Activated B cell treated with CpG ODN at 0.5 μM for 24 hours (primary cell): ENCODE measurements at regions of chr9 and their contacts with region 1.

Region 1: GRCh38 chr9:21812946-21813568 is 10.6 kb downstream of the MTAP start:
- DNase-seq: peak; percentile 64
- ATAC-seq: peak; percentile 83
- H3K4me3 Mint-ChIP-seq: no peak overlapping the region
- H3K27ac Mint-ChIP-seq: no peak overlapping the region
- H3K4me1 Mint-ChIP-seq: peaks cover 27% of the 10 kb centered on the region
- H3K27me3 Mint-ChIP-seq: no peaks in the 10 kb centered on the region
- CTCF ChIP-seq: peak; percentile 85

Region 2: DNA sequence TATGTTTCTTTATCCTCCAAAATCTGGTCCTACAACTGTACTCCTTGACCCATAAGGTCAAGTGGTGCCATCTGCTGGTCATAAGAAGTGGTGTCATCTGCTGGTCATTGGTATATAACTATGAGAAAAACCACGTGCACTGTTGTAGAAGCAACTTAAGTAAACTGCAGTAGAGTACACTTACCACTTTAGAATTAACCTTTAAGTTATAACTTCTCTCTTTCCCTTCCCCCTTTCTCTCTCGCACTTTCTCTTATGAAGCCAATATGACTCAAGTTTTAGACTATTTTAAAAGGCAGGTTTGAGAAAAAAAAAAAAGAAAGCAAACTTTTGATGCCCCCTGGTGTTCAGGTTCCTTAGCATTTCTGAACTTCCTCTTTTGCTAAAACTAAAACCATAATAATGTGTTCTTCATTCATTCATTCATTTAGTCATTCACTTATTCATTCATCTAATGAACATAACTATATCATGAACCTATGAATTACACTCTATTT is 23.5 kb before region 1 on chr9:
- CTCF ChIA-PET with region 1: no interaction called
- POLR2A ChIA-PET with region 1: no interaction called
- intact Hi-C with region 1: no loop called
- DNase-seq: no peak
- ATAC-seq: peak; percentile 98
- H3K4me3 Mint-ChIP-seq: peak overlapping the region; percentile 80
- H3K27ac Mint-ChIP-seq: peak overlapping the region; percentile 76
- H3K4me1 Mint-ChIP-seq: peaks cover 7% of the 10 kb centered on the region
- H3K27me3 Mint-ChIP-seq: peaks cover 17% of the 10 kb centered on the region
- CTCF ChIP-seq: peak; percentile 85

Region 3: GRCh38 chr9:21802195-21803000 is 10.7 kb before region 1 on chr9 and contains the start of gene MTAP:
- CTCF ChIA-PET with region 1: interaction called, 10 read pairs
- POLR2A ChIA-PET with region 1: interaction called, 5 read pairs
- intact Hi-C with region 1: loop called (anchors 1 kb)
- DNase-seq: peak; percentile 68
- ATAC-seq: peak; percentile 88
- H3K4me3 Mint-ChIP-seq: peak within 1 kb of the TSS; percentile 99
- H3K27ac Mint-ChIP-seq: peak within 1 kb of the TSS; percentile 91
- H3K4me1 Mint-ChIP-seq: peaks cover 53% of the 10 kb centered on the region
- H3K27me3 Mint-ChIP-seq: peaks cover 15% of the 10 kb centered on the region
- CTCF ChIP-seq: no peak
- total RNA-seq, gene MTAP: 30.4 and 43.2 TPM in 2 replicates

Region 4: DNA sequence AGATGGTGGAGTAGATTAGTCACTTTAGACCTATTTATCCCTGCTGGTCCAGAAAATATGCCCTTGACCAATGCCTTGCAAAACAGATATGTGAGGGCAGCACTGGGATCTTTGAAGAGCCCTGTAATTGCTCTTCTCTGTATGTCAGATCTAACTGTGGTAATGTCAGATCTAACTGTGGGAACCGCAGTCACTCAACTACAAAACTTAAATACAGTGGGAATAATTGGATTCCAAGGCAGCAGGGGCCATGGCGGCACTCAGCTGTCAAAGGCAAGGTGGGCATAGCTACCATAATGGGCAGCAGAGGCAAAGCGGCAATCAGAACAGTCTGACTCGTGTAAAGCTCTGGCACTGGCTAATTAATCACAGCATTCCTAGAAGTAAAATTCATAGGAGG is 35.6 kb after region 1 on chr9:
- CTCF ChIA-PET with region 1: no interaction called
- POLR2A ChIA-PET with region 1: no interaction called
- intact Hi-C with region 1: no loop called
- DNase-seq: no peak
- ATAC-seq: no peak
- H3K4me3 Mint-ChIP-seq: no peak overlapping the region
- H3K27ac Mint-ChIP-seq: no peak overlapping the region
- H3K4me1 Mint-ChIP-seq: peaks cover 14% of the 10 kb centered on the region
- H3K27me3 Mint-ChIP-seq: no peaks in the 10 kb centered on the region
- CTCF ChIP-seq: no peak

Region 5: DNA sequence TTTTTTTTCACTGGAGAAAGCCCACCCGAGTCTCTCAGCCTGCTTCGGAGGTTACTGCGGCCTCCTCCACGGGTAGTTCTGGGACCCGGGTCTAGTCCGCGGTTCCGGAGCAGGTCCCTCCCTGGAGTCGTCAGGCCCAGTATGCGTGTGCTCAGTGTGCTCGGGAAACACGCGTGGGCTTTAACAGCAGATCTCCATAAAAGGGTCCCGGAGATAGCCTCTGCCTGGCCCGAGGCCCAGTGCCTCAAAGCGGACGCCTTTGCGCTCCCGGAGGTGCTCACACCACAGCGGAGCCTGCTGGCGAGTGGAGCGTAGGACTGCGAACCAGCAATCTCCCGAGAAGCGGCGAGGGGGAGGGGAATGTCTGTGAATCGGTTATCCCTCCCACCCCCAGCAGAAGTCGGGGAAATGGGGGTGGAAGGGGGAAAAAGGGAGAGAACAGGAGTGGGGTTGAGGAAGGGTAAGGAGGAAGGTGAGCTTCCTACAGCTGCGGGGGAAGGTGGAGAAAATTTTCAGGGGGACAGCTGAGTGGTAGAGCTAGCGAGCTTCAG is 152.4 kb after region 1 on chr9:
- CTCF ChIA-PET with region 1: interaction called, 8 read pairs
- POLR2A ChIA-PET with region 1: no interaction called
- intact Hi-C with region 1: loop called (anchors 1 kb)
- DNase-seq: peak; percentile 41
- ATAC-seq: peak; percentile 67
- H3K4me3 Mint-ChIP-seq: peak overlapping the region; percentile 77
- H3K27ac Mint-ChIP-seq: peak overlapping the region; percentile 64
- H3K4me1 Mint-ChIP-seq: peaks cover 19% of the 10 kb centered on the region
- H3K27me3 Mint-ChIP-seq: peaks cover 74% of the 10 kb centered on the region
- CTCF ChIP-seq: no peak

Region 6: GRCh38 chr9:22037954-22038690 is 225.1 kb after region 1 on chr9:
- CTCF ChIA-PET with region 1: interaction called, 112 read pairs
- POLR2A ChIA-PET with region 1: no interaction called
- intact Hi-C with region 1: loop called (anchors 1 kb)
- DNase-seq: no peak
- ATAC-seq: no peak
- H3K4me3 Mint-ChIP-seq: no peak overlapping the region
- H3K27ac Mint-ChIP-seq: no peak overlapping the region
- H3K4me1 Mint-ChIP-seq: no peaks in the 10 kb centered on the region
- H3K27me3 Mint-ChIP-seq: no peaks in the 10 kb centered on the region
- CTCF ChIP-seq: no peak

Region 7: GRCh38 chr9:22244141-22245011 is 431.3 kb after region 1 on chr9:
- CTCF ChIA-PET with region 1: interaction called, 130 read pairs
- POLR2A ChIA-PET with region 1: interaction called, 6 read pairs
- intact Hi-C with region 1: loop called (anchors 1 kb)
- DNase-seq: no peak
- ATAC-seq: peak; percentile 54
- H3K4me3 Mint-ChIP-seq: no peak overlapping the region
- H3K27ac Mint-ChIP-seq: no peak overlapping the region
- H3K4me1 Mint-ChIP-seq: peaks cover 39% of the 10 kb centered on the region
- H3K27me3 Mint-ChIP-seq: peaks cover 15% of the 10 kb centered on the region
- CTCF ChIP-seq: no peak

Region 8: DNA sequence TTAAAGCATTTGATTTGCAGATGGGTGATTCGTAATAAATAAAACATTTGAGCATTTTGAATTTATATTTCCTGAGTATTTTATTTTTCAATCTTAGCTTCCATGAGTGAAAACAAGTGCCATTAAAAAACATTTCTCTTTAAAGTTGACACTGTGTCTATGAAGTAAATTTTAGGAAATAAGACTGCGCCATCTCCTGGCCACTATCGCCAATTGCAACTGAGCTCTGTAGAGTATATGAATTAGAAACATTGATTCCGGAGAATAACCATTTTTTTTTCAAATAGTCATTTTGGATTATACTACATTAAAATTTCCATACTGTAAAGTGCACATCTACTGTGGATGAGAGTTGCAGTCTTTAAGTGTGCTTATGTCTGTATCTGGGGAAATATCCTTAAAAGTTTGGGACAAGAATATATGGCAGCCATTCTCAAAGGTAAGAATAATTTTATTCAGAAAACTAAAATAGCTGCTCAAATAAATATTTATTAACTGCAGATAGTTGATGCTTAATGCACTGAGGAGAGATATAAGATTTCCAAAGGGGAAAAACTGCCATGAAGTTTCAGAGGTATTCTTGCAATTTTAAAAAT is 639.5 kb after region 1 on chr9:
- CTCF ChIA-PET with region 1: interaction called, 99 read pairs
- POLR2A ChIA-PET with region 1: no interaction called
- intact Hi-C with region 1: loop called (anchors 1 kb)
- DNase-seq: no peak
- ATAC-seq: peak; percentile 65
- H3K4me3 Mint-ChIP-seq: no peak overlapping the region
- H3K27ac Mint-ChIP-seq: no peak overlapping the region
- H3K4me1 Mint-ChIP-seq: peaks cover 9% of the 10 kb centered on the region
- H3K27me3 Mint-ChIP-seq: peaks cover 42% of the 10 kb centered on the region
- CTCF ChIP-seq: peak; percentile 90

Region 9: GRCh38 chr9:22700171-22700570 is 887.1 kb after region 1 on chr9:
- CTCF ChIA-PET with region 1: no interaction called
- POLR2A ChIA-PET with region 1: no interaction called
- intact Hi-C with region 1: no loop called
- DNase-seq: no peak
- ATAC-seq: no peak
- H3K4me3 Mint-ChIP-seq: no peak overlapping the region
- H3K27ac Mint-ChIP-seq: no peak overlapping the region
- H3K4me1 Mint-ChIP-seq: no peaks in the 10 kb centered on the region
- H3K27me3 Mint-ChIP-seq: no peaks in the 10 kb centered on the region
- CTCF ChIP-seq: no peak